Activated CD4-positive, alpha-beta T cell treated with anti-CD3 and anti-CD28 coated beads, Interleukin-2, amount 10 ng/mL, durations not matched to agents 24 days and 14 days (primary cell): ENCODE measurements at regions of chr5 and their contacts with region 1.

Region 1: GRCh38 chr5:169302491-169303118 is 1.7 kb upstream of the SLIT3 start:
- DNase-seq: peak; percentile 87
- H3K4me3 Mint-ChIP-seq: no peak overlapping the region
- H3K27ac Mint-ChIP-seq: no peak overlapping the region
- H3K4me1 Mint-ChIP-seq: no peaks in the 10 kb centered on the region
- H3K27me3 Mint-ChIP-seq: peaks cover 48% of the 10 kb centered on the region

Region 2: GRCh38 chr5:168268949-168269943 is 1033.4 kb before region 1 on chr5:
- intact Hi-C with region 1: loop called (anchors 2 kb)
- DNase-seq: peak; percentile 90
- H3K4me3 Mint-ChIP-seq: peak overlapping the region; percentile 51
- H3K27ac Mint-ChIP-seq: no peak overlapping the region
- H3K4me1 Mint-ChIP-seq: peaks cover 9% of the 10 kb centered on the region
- H3K27me3 Mint-ChIP-seq: peaks cover 20% of the 10 kb centered on the region

Region 3: GRCh38 chr5:168987543-168988300 is 314.9 kb before region 1 on chr5:
- intact Hi-C with region 1: loop called (anchors 2 kb)
- DNase-seq: peak; percentile 85
- H3K4me3 Mint-ChIP-seq: no peak overlapping the region
- H3K27ac Mint-ChIP-seq: no peak overlapping the region
- H3K4me1 Mint-ChIP-seq: peaks cover 2% of the 10 kb centered on the region
- H3K27me3 Mint-ChIP-seq: peaks cover 6% of the 10 kb centered on the region